Panc1 (cell line): ENCODE measurements at regions of chr16 and their contacts with region 1.

Region 1: GRCh38 chr16:10594367-10594944 is 14.1 kb upstream of the EMP2 start:
- DNase-seq: no peak
- ATAC-seq: no peak
- H3K4me3 ChIP-seq: no peak overlapping the region
- H3K27ac ChIP-seq: no peak overlapping the region
- H3K4me1 ChIP-seq: no peaks in the 10 kb centered on the region
- H3K27me3 ChIP-seq: peaks cover 5% of the 10 kb centered on the region; the same call in 1 of the 2 replicates
- CTCF ChIP-seq: no peak

Region 2: DNA sequence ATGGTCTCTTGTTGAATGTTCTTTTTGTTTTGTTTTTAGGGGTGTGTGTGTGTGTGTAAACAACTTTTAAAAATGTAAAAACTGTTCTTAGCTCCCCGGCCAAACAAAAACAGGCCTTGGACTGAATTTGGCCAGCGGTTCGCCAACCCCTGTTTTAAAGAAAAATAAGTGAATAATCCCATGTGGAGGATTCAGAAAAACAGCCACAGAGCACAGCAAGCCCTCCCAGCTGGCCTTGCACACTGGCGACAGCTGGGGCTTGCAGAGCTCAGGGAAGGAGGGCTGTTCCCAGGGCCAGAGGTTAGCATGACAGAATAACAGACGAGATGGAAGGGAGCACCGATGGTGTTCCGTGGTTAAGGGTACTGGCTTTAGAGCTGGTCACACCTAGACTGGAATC is 53.1 kb before region 1 on chr16:
- CTCF ChIA-PET with region 1: no interaction called
- POLR2A ChIA-PET with region 1: no interaction called
- in situ Hi-C with region 1: no loop called
- intact Hi-C with region 1: no loop called
- DNase-seq: no peak
- ATAC-seq: no peak
- H3K4me3 ChIP-seq: no peak overlapping the region
- H3K27ac ChIP-seq: no peak overlapping the region
- H3K4me1 ChIP-seq: no peaks in the 10 kb centered on the region
- H3K27me3 ChIP-seq: no peaks in the 10 kb centered on the region
- CTCF ChIP-seq: no peak

Region 3: DNA sequence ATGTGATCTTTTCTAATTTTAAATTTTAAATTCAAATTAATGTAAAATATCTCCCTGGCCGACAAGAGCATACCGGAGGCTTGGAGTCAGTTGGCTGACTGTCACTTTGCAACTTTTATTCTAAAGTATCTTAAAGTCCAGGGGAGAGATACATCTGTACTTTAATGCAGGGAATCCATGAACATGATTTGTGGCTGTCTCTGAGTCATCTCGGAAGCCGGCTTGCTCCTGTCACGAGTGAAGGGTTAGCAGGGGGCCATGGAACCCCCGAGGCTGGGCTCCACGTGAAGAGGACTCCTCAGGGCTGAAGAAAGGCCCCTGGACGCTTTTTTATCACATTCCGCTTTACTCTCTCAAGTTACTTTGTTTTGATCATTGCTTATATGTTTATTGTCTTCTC is 210.9 kb after region 1 on chr16:
- CTCF ChIA-PET with region 1: no interaction called
- POLR2A ChIA-PET with region 1: interaction called, 11 read pairs
- in situ Hi-C with region 1: no loop called
- intact Hi-C with region 1: no loop called
- DNase-seq: no peak
- ATAC-seq: no peak
- H3K4me3 ChIP-seq: no peak overlapping the region
- H3K27ac ChIP-seq: no peak overlapping the region
- H3K4me1 ChIP-seq: no peaks in the 10 kb centered on the region
- H3K27me3 ChIP-seq: no peaks in the 10 kb centered on the region
- CTCF ChIP-seq: no peak